Dorsolateral prefrontal cortex (tissue), 120 donors: ENCODE measurements at regions of chr7 and their contacts with region 1.

Region 1: GRCh38 chr7:135977007-135977741 is at the start of gene MTPN:
- DNase-seq: peak; percentile 95 to 98 (median 98)
- H3K4me3 ChIP-seq: peak within 1 kb of the TSS; percentile 56 to 100 (median 95)
- H3K27ac ChIP-seq: peak within 1 kb of the TSS in 58 of 59 donors; percentile 5 to 92 (median 80)
- H3K27me3 ChIP-seq: no peaks in the 10 kb centered on the region
- CTCF ChIP-seq: peak in 40 of 56 donors; percentile 7 to 65 (median 32)
- total RNA-seq, gene MTPN: 80.0 to 205 (median 144) TPM

Region 2: DNA sequence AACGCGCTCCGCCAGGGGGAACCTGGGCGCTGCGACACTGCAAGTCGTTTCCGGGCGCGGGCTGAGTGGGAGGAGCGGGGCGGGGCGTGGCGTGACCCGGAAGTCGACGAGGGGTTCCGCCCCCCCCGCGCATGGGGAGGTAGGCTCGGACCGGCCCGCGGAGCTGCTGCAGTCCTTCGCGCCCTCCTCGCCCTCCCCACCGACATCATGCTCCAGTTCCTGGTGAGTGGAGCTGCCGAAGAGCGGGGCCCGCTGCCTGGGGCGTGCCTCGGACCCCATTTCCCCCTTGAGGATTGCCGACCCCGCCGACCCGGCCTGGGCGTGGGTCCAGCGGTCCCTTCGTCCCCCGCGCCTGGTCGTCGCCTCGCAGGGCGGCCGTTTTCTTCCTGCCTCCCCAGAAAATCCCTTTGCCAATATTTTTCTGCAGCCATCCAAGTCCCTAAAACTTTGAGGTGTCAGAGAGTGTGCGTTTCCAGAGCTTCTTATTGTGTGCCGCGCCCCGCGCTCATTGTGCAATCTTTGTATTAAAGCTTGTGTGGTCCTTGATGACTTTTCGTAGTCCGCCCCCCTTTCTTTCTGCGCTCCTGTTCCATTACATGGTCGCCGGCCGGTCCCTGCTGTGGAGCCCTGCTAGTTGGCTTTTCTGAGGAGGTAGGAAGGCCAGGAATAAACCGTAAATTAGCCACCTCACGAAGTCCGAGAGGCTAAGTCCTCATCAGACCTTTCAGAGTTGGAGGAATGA is 314.6 kb before region 1 on chr7 and contains the start of gene STMP1:
- intact Hi-C with region 1: loop called (anchors 2 to 5 kb)
- DNase-seq: peak; percentile 88 to 96 (median 94)
- H3K4me3 ChIP-seq: peak within 1 kb of the TSS; percentile 64 to 100 (median 94)
- H3K27ac ChIP-seq: peak within 1 kb of the TSS; percentile 57 to 97 (median 90)
- H3K27me3 ChIP-seq: no peaks in the 10 kb centered on the region
- CTCF ChIP-seq: peak in 52 of 56 donors; percentile 20 to 98 (median 92)
- total RNA-seq, gene STMP1: 14.7 to 33.0 (median 23.4) TPM

Region 3: DNA sequence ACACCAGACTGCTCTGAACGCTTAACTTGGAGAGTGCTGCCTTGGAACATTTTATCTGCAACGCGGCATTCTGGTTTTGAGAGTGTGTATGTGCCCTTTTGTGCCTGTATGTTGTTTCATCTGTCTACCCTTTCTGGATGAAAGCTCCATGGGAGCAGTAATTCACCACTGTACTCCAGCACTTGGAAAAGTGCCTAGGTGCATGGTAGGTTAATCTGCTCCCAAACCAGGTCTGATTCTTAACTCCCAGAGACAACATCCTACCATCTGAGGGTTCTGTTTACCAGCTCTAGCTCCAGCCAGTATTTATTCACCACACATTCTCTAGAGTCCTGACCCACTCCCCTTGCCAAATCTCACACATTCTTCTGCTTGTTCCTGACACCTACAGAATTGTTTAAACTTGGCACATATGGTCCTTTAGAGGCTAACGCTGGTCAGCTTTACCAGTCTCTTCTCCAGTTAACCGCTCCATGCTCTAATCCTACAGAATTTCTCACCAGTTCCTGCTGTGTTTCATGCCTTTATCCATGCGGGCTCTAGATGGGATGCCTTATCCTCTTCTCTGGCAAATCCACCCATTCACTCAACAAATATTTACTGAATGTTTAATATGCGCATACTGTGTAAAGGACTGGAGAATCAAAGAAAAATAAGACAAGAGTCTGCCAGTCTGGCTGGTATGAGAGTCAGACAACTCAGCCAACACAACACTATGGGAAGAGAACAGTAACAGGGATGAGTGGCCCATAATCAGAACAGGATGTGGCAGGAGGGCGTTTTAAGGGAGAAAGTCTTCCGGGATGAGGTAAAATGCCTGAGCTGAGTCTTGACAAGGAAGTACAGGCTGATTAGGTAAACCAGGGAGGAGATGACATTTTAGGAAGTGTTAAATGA is 46.4 kb before region 1 on chr7:
- intact Hi-C with region 1: no loop called
- DNase-seq: no peak
- H3K4me3 ChIP-seq: no peak overlapping the region
- H3K27ac ChIP-seq: peak overlapping the region in 8 of 59 donors; percentile 9 to 56 (median 26)
- H3K27me3 ChIP-seq: no peaks in the 10 kb centered on the region
- CTCF ChIP-seq: no peak